Astrocyte of the cerebellum (primary cell): ENCODE measurements at regions of chr3 and their contacts with region 1.

Region 1: GRCh38 chr3:33355611-33356010 is 78.4 kb downstream of the FBXL2 start:
- DNase-seq: peak; percentile 54
- H3K4me3 ChIP-seq: no peak overlapping the region
- CTCF ChIP-seq: no peak

Region 2: DNA sequence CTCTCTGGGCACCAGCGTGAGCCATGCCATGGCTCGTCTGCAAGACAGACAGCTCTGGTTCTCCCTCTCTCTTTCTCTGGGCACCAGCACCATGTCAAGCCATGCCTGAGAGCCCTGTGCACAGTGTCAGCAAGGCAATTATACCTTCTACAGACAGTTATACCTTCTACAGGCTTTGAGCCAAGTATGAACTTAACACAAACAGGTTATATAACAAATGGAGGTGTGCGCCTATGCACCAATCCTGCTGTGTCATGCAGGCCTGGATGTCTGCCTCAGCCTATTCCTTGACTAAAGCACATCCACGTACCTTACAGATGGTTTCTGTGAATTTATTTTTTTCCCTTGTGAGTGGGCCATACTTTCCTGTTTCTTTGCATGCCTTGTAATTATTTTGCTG is 84.3 kb before region 1 on chr3:
- in situ Hi-C with region 1: no loop called
- DNase-seq: no peak
- H3K4me3 ChIP-seq: no peak overlapping the region
- CTCF ChIP-seq: no peak

Region 3: DNA sequence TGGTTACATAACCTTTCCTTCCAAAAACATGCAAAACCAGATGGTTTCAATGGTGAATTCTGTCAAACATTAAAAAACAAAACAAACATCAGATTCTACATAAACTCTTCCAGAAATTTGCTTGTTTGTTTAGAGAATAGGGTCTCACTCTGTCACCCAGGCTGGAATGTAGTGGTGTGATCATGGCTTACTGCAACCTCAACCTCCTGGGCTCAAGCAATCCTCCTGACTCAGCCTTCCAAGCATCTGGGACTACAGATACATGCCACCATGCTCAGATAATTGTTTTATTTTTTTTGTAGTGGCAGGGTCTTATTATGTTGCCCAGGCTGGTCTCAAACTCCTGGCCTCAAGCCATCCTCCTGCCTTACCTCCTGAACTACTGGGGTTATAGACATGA is 42.3 kb before region 1 on chr3:
- in situ Hi-C with region 1: loop called (anchors 5 kb)
- DNase-seq: no peak
- H3K4me3 ChIP-seq: no peak overlapping the region
- CTCF ChIP-seq: no peak